MCF 10A (cell line): ENCODE measurements at regions of chr11 and their contacts with region 1.

Region 1: GRCh38 chr11:62556108-62556871 is 9.7 kb upstream of the AHNAK start:
- DNase-seq: peak; percentile 97
- H3K4me3 Mint-ChIP-seq: peak overlapping the region; percentile 70
- H3K27ac Mint-ChIP-seq: peak overlapping the region; percentile 95
- H3K4me1 Mint-ChIP-seq: peaks cover 66% of the 10 kb centered on the region
- H3K27me3 Mint-ChIP-seq: no peaks in the 10 kb centered on the region
- CTCF ChIP-seq: no peak

Region 2: GRCh38 chr11:61885166-61885778 is 671.0 kb before region 1 on chr11:
- CTCF ChIA-PET with region 1: no interaction called
- POLR2A ChIA-PET with region 1: no interaction called
- intact Hi-C with region 1: no loop called
- DNase-seq: no peak
- H3K4me3 Mint-ChIP-seq: no peak overlapping the region
- H3K27ac Mint-ChIP-seq: no peak overlapping the region
- H3K4me1 Mint-ChIP-seq: peaks cover 31% of the 10 kb centered on the region
- H3K27me3 Mint-ChIP-seq: no peaks in the 10 kb centered on the region
- CTCF ChIP-seq: no peak

Region 3: GRCh38 chr11:61967116-61967923 is 589.0 kb before region 1 on chr11 and contains the start of gene FTH1:
- CTCF ChIA-PET with region 1: no interaction called
- POLR2A ChIA-PET with region 1: interaction called, 13 read pairs
- intact Hi-C with region 1: no loop called
- DNase-seq: peak; percentile 90
- H3K4me3 Mint-ChIP-seq: peak within 1 kb of the TSS; percentile 90
- H3K27ac Mint-ChIP-seq: peak within 1 kb of the TSS; percentile 97
- H3K4me1 Mint-ChIP-seq: peaks cover 58% of the 10 kb centered on the region
- H3K27me3 Mint-ChIP-seq: no peaks in the 10 kb centered on the region
- CTCF ChIP-seq: no peak
- total RNA-seq, gene FTH1: 8,367 and 15,492 TPM in 2 replicates

Region 4: GRCh38 chr11:62132188-62132587 is 424.1 kb before region 1 on chr11:
- CTCF ChIA-PET with region 1: no interaction called
- POLR2A ChIA-PET with region 1: no interaction called
- intact Hi-C with region 1: no loop called
- DNase-seq: peak; percentile 70
- H3K4me3 Mint-ChIP-seq: peak overlapping the region; percentile 12
- H3K27ac Mint-ChIP-seq: peak overlapping the region; percentile 56
- H3K4me1 Mint-ChIP-seq: peaks cover 20% of the 10 kb centered on the region
- H3K27me3 Mint-ChIP-seq: no peaks in the 10 kb centered on the region
- CTCF ChIP-seq: no peak

Region 5: GRCh38 chr11:62427630-62428233 is 128.6 kb before region 1 on chr11:
- CTCF ChIA-PET with region 1: interaction called, 43 read pairs
- POLR2A ChIA-PET with region 1: interaction called, 11 read pairs
- intact Hi-C with region 1: loop called (anchors 1 kb)
- DNase-seq: no peak
- H3K4me3 Mint-ChIP-seq: no peak overlapping the region
- H3K27ac Mint-ChIP-seq: no peak overlapping the region
- H3K4me1 Mint-ChIP-seq: peaks cover 7% of the 10 kb centered on the region
- H3K27me3 Mint-ChIP-seq: no peaks in the 10 kb centered on the region
- CTCF ChIP-seq: no peak

Region 6: GRCh38 chr11:62542750-62543567 is 13.3 kb before region 1 on chr11:
- CTCF ChIA-PET with region 1: interaction called, 225 read pairs
- POLR2A ChIA-PET with region 1: interaction called, 599 read pairs
- intact Hi-C with region 1: loop called (anchors 1 kb)
- DNase-seq: peak; percentile 82
- H3K4me3 Mint-ChIP-seq: peak overlapping the region; percentile 99
- H3K27ac Mint-ChIP-seq: peak overlapping the region; percentile 69
- H3K4me1 Mint-ChIP-seq: peaks cover 44% of the 10 kb centered on the region
- H3K27me3 Mint-ChIP-seq: no peaks in the 10 kb centered on the region
- CTCF ChIP-seq: peak; percentile 99

Region 7: GRCh38 chr11:62601394-62602140 is 45.3 kb after region 1 on chr11 and contains the start of gene MTA2:
- CTCF ChIA-PET with region 1: interaction called, 5 read pairs
- POLR2A ChIA-PET with region 1: interaction called, 44 read pairs
- intact Hi-C with region 1: no loop called
- DNase-seq: peak; percentile 98
- H3K4me3 Mint-ChIP-seq: peak within 1 kb of the TSS; percentile 86
- H3K27ac Mint-ChIP-seq: peak within 1 kb of the TSS; percentile 96
- H3K4me1 Mint-ChIP-seq: peaks cover 38% of the 10 kb centered on the region
- H3K27me3 Mint-ChIP-seq: no peaks in the 10 kb centered on the region
- CTCF ChIP-seq: no peak
- total RNA-seq, gene MTA2: 139 and 176 TPM in 2 replicates

Region 8: DNA sequence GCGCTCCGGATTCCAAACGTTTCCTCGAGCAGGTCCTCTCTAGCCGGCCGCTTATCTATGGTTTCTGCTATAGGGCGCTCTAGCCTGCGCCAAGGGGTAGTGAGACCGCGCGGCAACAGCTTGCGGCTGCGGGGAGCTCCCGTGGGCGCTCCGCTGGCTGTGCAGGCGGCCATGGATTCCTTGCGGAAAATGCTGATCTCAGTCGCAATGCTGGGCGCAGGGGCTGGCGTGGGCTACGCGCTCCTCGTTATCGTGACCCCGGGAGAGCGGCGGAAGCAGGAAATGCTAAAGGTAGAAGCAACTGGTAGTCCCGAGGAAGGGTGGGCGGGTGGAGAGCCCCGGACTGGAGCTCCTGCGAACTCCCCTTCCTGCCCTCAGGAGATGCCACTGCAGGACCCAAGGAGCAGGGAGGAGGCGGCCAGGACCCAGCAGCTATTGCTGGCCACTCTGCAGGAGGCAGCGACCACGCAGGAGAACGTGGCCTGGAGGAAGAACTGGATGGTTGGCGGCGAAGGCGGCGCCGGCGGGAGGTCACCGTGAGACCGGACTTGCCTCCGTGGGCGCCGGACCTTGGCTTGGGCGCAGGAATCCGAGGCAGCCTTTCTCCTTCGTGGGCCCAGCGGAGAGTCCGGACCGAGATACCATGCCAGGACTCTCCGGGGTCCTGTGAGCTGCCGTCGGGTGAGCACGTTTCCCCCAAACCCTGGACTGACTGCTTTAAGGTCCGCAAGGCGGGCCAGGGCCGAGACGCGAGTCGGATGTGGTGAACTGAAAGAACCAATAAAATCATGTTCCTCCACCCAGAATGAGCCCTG is 115.5 kb after region 1 on chr11 and contains the starts of genes LBHD1 and UQCC3:
- CTCF ChIA-PET with region 1: interaction called, 3 read pairs
- POLR2A ChIA-PET with region 1: interaction called, 12 read pairs
- intact Hi-C with region 1: no loop called
- DNase-seq: peak; percentile 85
- H3K4me3 Mint-ChIP-seq: peak within 1 kb of the TSS; percentile 95
- H3K27ac Mint-ChIP-seq: peak within 1 kb of the TSS; percentile 95
- H3K4me1 Mint-ChIP-seq: peaks cover 6% of the 10 kb centered on the region
- H3K27me3 Mint-ChIP-seq: no peaks in the 10 kb centered on the region
- CTCF ChIP-seq: no peak
- total RNA-seq, gene LBHD1: 8.3 and 8.7 TPM in 2 replicates
- total RNA-seq, gene UQCC3: 11.6 and 13.8 TPM in 2 replicates